ENCODE measurements at regions of chr9 and their contacts with region 1.

Region 1: GRCh38 chr9:122991370-122991830 is 42.1 kb upstream of the GPR21 start:
- DNase-seq: peak; percentile 83
- H3K4me3 ChIP-seq: no peak overlapping the region
- H3K27ac ChIP-seq: no peak overlapping the region
- H3K4me1 ChIP-seq: peaks cover 9% of the 10 kb centered on the region
- H3K27me3 ChIP-seq: no peaks in the 10 kb centered on the region
- CTCF ChIP-seq: peak; percentile 82

Region 2: DNA sequence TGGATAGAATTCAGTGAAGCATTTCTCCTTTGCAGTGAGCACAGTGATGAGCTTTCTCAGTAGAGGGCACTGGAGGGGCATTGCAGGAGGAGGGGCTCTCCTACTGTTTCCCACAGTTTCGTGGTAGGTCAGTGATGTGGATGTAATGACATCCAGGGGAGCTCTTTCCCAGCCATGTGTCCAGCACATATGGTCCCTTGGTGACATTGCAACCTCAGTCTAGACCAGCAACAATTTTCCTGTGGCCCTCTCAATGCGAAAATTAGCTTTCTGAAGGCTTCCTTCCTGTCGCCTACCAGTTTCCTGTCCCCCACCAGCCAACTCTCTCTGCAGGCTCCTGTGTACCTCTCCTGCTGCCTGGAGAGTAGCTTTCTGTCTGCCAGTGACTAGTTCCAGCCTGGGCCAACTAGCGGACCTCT is 156.1 kb before region 1 on chr9:
- CTCF ChIA-PET with region 1: no interaction called
- POLR2A ChIA-PET with region 1: no interaction called
- intact Hi-C with region 1: loop called (anchors 5 kb)
- DNase-seq: peak; percentile 60
- H3K4me3 ChIP-seq: peak overlapping the region; percentile 10
- H3K27ac ChIP-seq: peak overlapping the region; percentile 69
- H3K4me1 ChIP-seq: peaks cover 9% of the 10 kb centered on the region
- H3K27me3 ChIP-seq: no peaks in the 10 kb centered on the region
- CTCF ChIP-seq: peak; percentile 51